ENCODE measurements at regions of chr14 and their contacts with region 1.

Region 1: DNA sequence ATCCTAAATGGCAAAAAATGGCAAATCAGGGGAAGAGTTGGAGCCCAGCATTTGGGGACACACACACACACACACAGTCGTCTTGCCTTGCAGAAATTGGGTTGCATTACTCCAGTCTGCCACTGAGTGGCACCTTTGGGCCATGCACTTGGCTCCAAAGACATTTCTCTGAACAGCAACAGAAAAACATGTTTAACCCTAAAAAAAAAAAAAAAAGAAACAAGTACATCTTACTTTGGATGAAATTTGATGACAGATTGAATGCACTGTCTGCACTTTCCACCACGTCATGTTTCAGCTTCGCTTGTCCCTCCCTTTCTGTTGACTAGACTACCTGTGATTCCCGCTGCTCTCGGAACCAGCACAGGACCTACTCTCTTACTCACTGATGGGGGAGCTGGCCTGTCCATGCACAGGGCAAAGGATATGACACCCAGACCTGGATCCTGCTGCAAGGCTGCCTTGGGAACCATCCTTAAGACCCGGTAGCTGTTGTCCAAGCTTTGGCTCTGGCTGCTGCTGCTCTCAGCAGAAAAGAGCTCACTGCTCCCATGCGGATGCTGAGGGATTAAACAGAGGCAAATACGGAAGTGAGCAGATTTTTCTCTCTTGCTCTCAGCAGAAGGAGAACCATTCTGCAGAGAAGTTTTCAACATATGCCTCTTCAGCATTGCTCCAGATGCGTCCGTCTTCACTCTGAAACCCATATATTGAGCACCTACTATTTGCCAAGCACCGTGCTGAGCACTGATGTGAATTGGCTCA is 376.8 kb downstream of the DPF3 start:
- DNase-seq: peak; percentile 89
- H3K4me3 Mint-ChIP-seq: no peak overlapping the region
- H3K27ac Mint-ChIP-seq: peak overlapping the region; percentile 98
- H3K4me1 Mint-ChIP-seq: peaks cover 83% of the 10 kb centered on the region
- H3K27me3 Mint-ChIP-seq: peaks cover 27% of the 10 kb centered on the region

Region 2: DNA sequence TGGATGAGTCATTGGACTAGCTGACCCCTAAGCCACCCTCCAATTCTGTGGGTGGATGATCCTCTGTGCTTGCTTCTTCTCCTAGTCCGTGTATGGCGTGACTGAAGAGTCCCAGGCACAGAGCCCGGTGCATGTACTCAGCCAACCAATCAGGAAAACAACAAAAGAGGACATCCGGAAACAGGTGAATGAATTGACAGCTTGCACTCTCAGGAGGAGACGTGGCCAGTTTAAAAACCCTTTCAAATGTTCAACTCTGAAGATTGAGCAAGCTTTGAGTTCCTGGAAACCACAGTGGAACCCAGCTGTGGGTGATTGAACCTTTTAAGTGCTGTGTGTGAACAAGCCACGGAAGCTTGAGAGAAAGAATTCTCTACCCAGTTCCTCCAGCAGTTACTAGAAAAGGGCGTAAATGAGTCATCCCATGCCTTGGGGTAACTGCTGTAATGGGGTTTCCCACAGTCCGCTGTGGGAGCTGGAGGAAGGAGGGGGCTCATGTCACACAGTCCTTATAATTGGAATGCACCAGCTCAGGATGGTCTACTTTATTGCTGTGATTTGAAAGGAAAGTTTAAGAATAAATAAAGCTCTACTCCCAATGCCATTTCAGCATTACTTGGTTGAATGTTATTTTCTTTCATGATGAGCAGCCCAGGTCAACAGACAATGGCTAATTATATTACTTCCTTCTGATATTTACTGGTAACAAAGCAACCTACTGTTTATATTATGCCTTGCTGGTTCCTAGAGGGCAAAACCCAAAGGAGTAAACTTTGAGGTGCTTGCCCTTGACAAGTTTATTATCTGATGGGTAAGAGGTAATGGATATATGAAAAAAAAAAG is 40.2 kb before region 1 on chr14:
- CTCF ChIA-PET with region 1: interaction called, 47 read pairs
- DNase-seq: peak; percentile 91
- H3K4me3 Mint-ChIP-seq: peak overlapping the region; percentile 55
- H3K27ac Mint-ChIP-seq: peak overlapping the region; percentile 91
- H3K4me1 Mint-ChIP-seq: peaks cover 83% of the 10 kb centered on the region
- H3K27me3 Mint-ChIP-seq: peaks cover 9% of the 10 kb centered on the region

Region 3: DNA sequence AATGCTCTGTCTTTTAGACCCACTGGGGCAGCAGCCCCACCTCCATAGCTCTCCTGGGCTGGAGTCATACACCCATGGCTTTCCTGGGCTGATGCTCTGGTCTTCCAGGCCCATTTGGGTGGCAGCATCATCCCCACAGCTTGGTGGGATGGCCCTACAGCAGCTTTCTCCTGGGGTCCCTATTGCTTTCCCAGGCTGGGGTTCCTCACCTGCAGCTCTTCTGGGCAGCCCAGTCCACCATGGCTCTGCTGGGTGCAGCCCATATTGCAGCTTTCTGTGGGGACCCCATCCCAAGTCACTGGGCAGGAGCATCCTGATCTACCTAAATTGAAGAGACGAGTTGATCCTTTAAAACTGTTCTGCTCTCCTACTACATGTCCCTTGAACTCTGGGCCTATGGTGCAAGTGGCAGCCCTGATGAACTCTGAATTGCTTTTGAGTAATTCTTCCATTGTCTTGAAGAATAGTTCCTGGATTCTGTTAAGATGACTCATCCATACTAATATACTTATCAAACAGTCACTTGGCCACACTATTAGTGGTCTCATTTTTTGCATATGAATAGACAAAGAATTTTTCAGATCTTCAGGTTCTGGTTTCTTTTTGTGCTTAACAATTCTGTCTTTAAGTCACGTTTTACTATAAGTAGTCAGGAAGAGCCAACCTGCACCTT is 13.3 kb before region 1 on chr14:
- CTCF ChIA-PET with region 1: interaction called, 17 read pairs
- DNase-seq: no peak
- H3K4me3 Mint-ChIP-seq: no peak overlapping the region
- H3K27ac Mint-ChIP-seq: no peak overlapping the region
- H3K4me1 Mint-ChIP-seq: no peaks in the 10 kb centered on the region
- H3K27me3 Mint-ChIP-seq: peaks cover 47% of the 10 kb centered on the region

Region 4: GRCh38 chr14:72657214-72657921 is 140.2 kb after region 1 on chr14:
- CTCF ChIA-PET with region 1: no interaction called
- DNase-seq: no peak
- H3K4me3 Mint-ChIP-seq: no peak overlapping the region
- H3K27ac Mint-ChIP-seq: no peak overlapping the region
- H3K4me1 Mint-ChIP-seq: peaks cover 2% of the 10 kb centered on the region
- H3K27me3 Mint-ChIP-seq: peaks cover 18% of the 10 kb centered on the region

Region 5: GRCh38 chr14:72893636-72894321 is 376.7 kb after region 1 on chr14 and contains the start of gene DPF3:
- CTCF ChIA-PET with region 1: interaction called, 33 read pairs
- DNase-seq: peak; percentile 97
- H3K4me3 Mint-ChIP-seq: peak within 1 kb of the TSS; percentile 87
- H3K27ac Mint-ChIP-seq: peak within 1 kb of the TSS; percentile 78
- H3K4me1 Mint-ChIP-seq: peaks cover 26% of the 10 kb centered on the region
- H3K27me3 Mint-ChIP-seq: peaks cover 85% of the 10 kb centered on the region

Region 6: DNA sequence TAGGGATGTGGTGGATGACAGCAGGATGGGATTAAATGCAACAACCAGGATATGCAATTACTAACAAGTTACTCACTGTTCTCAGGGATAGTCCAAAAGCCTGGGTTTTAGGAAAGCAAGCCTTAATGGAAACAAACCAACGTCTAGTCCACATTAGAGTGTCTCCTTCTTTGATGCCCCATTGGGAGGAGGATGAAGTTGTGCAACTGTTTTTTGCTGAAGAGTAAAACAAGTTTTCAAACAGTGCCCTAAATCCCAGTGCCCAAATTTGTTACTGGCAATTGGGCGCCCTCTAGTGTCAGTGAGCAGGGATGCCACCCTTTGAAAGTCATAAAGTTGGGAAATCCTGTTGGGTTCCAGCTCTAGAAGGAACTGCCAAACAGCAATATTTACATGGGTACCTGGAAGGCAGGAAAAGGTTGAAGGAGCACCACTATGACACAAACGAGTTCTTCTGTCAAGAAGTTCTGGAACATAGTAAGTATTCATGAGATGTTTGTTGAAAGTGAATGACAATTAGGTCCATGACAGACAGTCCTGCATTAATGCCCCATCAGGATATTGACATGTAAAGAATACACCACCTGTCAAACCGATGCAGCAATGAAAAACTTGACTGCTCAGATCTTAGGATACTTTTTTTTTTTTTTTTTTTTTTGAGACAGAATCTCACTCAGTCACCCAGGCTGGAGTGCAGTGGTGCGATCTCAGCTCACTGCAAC is 387.9 kb after region 1 on chr14:
- CTCF ChIA-PET with region 1: interaction called, 228 read pairs
- DNase-seq: peak; percentile 75
- H3K4me3 Mint-ChIP-seq: no peak overlapping the region
- H3K27ac Mint-ChIP-seq: no peak overlapping the region
- H3K4me1 Mint-ChIP-seq: peaks cover 19% of the 10 kb centered on the region
- H3K27me3 Mint-ChIP-seq: peaks cover 54% of the 10 kb centered on the region

Region 7: DNA sequence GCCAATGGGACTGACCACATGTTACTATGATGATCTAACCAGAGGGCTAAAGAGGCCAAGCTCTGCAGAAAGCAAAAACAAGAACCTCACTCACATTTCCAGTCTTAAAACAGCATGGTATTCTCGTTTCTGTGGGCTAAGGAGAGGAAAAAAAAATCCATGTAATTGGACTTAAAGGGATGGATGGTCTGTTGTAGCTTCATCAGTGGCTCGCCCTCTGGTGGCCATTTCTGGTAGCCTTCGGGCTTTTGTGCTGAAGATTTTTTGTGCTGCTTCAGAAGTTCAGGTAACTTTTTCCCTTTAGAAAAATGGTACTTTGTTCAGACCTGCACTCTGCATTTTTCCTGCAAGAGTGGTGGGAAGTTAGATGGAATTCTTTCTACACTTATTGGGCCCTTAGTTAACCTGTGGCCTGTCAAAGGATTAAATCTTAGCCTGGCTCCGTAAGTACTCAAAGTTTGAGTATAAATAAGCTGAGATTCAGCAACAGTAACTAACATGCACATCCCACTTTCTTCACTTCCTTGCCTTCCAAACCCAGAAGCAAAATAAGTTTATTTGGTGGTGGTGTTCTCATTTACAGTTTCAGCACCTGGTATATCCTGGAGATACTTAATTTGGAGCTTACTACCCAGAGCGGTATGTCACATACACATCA is 431.5 kb after region 1 on chr14:
- CTCF ChIA-PET with region 1: interaction called, 89 read pairs
- DNase-seq: peak; percentile 82
- H3K4me3 Mint-ChIP-seq: no peak overlapping the region
- H3K27ac Mint-ChIP-seq: peak overlapping the region; percentile 22
- H3K4me1 Mint-ChIP-seq: peaks cover 5% of the 10 kb centered on the region
- H3K27me3 Mint-ChIP-seq: no peaks in the 10 kb centered on the region

Measured in activated naive CD4-positive, alpha-beta T cell treated with anti-CD3 and anti-CD28 coated beads, Interleukin-2, amount 10 ng/mL, durations not matched to agents 7 days and 5 days (primary cell).